ENCODE measurements at regions of chr5 and their contacts with region 1.

Region 1: DNA sequence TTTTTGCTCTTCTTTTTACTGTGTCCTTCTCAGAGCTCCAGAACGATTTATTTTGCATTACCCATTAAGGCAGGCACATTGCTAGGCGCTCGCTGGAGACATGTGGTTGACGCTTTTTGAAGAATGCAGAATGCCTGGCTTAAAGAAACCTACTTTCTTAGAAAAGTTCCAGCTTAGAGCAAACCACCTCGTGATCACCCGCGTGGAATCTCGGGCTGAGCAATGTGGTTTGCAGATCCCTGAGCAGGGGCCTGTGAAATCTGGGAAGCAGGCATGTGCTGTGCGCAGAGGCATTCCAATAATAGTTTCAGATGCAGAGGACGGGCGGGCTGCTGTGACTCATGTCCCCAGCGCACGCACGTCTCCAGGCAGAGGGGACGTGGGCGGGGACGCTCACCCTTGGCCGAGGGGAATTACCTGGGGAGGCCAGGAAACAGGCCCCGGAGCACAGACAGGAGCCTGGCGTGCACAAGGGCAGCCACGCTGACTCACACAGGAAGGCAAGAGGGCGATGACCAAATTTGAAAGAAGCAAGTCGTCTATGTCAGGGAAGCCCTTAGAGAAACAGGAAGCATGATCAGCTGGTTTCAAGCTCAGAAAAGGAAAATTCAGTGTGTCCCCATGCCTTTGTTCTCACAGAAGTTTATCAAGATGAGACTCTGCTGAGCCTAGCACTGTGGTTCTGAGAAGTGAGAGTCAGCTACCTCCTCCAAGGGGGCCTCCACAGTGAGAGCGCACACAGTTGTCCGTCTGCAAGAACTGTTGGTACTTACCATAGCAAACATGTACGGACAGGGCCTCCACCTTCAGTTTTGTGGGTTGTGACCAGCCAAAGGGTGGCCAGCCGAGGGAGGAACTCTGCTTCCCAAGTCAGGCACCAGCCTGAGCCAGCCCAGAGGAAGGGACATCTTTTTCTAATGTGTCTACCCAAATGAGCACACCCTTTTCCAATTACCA is 218.6 kb downstream of the PIK3R1 start:
- DNase-seq: peak; percentile 78
- ATAC-seq: peak; percentile 97
- H3K4me3 Mint-ChIP-seq: peak overlapping the region; percentile 71
- H3K27ac Mint-ChIP-seq: peak overlapping the region; percentile 85
- H3K4me1 Mint-ChIP-seq: peaks cover 39% of the 10 kb centered on the region
- H3K27me3 Mint-ChIP-seq: no peaks in the 10 kb centered on the region
- CTCF ChIP-seq: no peak

Region 2: GRCh38 chr5:67003935-67004729 is 1430.1 kb before region 1 on chr5:
- CTCF ChIA-PET with region 1: no interaction called
- POLR2A ChIA-PET with region 1: no interaction called
- intact Hi-C with region 1: loop called (anchors 5 kb)
- DNase-seq: peak; percentile 66
- ATAC-seq: peak; percentile 79
- H3K4me3 Mint-ChIP-seq: peak overlapping the region; percentile 87
- H3K27ac Mint-ChIP-seq: peak overlapping the region; percentile 72
- H3K4me1 Mint-ChIP-seq: peaks cover 30% of the 10 kb centered on the region
- H3K27me3 Mint-ChIP-seq: no peaks in the 10 kb centered on the region
- CTCF ChIP-seq: no peak

Region 3: GRCh38 chr5:67221487-67222242 is 1212.5 kb before region 1 on chr5:
- CTCF ChIA-PET with region 1: no interaction called
- POLR2A ChIA-PET with region 1: no interaction called
- intact Hi-C with region 1: loop called (anchors 5 kb)
- DNase-seq: no peak
- ATAC-seq: peak; percentile 75
- H3K4me3 Mint-ChIP-seq: peak overlapping the region; percentile 78
- H3K27ac Mint-ChIP-seq: peak overlapping the region; percentile 97
- H3K4me1 Mint-ChIP-seq: peaks cover 65% of the 10 kb centered on the region
- H3K27me3 Mint-ChIP-seq: no peaks in the 10 kb centered on the region
- CTCF ChIP-seq: no peak

Region 4: DNA sequence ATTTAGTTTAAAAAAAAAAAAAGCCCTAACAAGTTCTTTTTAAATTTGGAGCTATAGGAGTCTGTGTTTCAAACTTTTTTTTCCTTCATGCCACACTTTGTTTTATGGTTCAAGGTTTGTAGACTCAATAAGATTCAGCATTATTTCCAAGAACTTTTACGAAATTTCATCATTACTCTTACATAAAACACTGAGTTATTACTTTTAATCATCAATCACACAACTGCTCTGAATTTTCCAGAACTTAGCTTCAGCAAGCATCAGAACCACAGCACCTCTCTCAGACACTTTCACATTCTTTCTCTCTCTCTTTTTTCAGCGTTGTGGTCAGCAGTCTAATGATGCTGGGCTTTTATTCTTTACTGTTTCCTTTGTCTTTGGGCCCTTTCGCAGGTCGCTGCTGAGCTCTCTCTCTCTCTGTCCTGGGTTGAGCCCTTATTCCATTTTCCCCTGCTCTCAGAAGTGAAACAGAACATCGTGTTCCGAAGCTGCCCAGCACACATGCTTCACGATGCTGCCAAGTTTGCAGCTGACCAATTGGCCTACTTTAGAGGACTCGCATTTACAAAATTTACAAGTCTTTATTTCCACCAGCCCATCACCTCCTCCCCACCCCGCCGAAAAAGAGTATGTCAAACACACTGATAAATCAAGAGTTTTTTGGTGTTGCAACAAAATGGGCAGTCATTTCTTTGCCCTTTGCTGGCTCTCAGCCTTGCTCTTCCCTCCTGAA is 263.2 kb before region 1 on chr5:
- CTCF ChIA-PET with region 1: no interaction called
- POLR2A ChIA-PET with region 1: no interaction called
- intact Hi-C with region 1: no loop called
- DNase-seq: no peak
- ATAC-seq: no peak
- H3K4me3 Mint-ChIP-seq: no peak overlapping the region
- H3K27ac Mint-ChIP-seq: no peak overlapping the region
- H3K4me1 Mint-ChIP-seq: no peaks in the 10 kb centered on the region
- H3K27me3 Mint-ChIP-seq: peaks cover 1% of the 10 kb centered on the region
- CTCF ChIP-seq: no peak

Region 5: DNA sequence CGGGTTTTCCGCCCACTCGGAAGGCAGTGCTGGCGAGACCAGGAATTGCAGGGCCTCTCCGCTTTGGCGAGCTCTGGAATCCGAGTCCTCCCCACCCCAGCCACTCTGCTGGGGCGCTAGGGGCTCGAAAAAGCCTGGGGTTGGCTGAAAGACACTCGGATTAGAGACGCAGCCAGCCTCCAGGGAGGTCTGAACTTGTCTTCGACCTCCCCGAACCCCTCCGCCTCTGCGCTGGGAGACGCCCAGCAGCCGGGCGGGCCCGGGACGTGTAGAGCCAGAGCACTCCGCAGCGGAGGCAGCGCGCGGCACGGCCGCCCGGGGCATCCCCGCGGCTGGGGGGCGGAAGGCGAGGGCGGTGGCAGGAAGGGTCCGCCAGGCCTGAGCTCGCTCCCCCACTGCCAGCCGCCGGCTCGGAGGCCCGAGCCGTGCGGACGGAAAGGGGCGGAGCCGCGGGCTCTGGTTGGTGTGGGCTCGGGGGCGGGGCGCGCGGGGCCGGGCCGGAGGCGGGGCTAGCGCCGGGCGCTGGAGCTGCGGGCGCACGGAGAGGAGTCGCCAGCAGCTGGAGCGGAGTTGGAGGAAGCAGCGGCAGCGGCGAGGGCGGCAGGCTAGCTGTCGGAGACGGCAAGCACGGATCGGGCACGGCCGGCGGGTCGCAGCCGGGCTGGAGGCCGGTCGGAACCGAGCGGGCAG is 218.8 kb before region 1 on chr5 and contains the start of gene PIK3R1:
- CTCF ChIA-PET with region 1: no interaction called
- POLR2A ChIA-PET with region 1: interaction called, 4 read pairs
- intact Hi-C with region 1: loop called (anchors 1 kb)
- DNase-seq: peak; percentile 96
- ATAC-seq: peak; percentile 83
- H3K4me3 Mint-ChIP-seq: peak within 1 kb of the TSS; percentile 95
- H3K27ac Mint-ChIP-seq: peak within 1 kb of the TSS; percentile 96
- H3K4me1 Mint-ChIP-seq: peaks cover 43% of the 10 kb centered on the region
- H3K27me3 Mint-ChIP-seq: no peaks in the 10 kb centered on the region
- CTCF ChIP-seq: no peak
- total RNA-seq, gene PIK3R1: 45.5 and 52.2 TPM in 2 replicates

Region 6: DNA sequence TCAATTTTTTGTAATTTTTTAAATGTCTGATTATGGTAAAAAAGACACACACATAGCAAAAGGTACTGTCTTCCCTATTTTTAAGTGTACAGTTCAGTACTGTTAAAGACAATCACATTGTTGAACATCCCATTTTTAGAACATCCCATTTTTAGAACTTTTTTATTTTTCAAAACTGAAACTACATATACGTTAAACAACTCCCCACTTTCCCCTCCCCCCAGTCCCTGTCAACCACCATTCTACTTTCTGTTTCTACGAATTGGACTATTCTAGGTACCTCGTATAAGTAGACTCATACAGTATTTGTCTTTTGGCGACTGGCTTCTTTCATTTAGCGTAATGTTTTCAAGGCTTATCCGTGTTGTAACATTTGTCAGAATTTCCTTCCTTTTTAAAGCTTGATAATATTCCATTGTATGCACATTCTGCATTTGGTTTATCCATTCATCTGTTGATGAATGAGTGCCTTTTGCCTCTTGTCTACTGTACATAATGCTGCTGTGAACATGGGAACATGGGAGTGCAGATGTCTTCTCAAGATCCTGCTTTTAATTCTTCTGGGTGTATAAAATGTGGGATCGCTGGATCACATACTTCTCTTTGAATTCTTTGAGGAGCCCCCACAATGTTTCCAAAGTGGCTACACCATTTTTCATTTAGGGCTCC is 64.6 kb before region 1 on chr5:
- CTCF ChIA-PET with region 1: no interaction called
- POLR2A ChIA-PET with region 1: no interaction called
- intact Hi-C with region 1: loop called (anchors 2 kb)
- DNase-seq: no peak
- ATAC-seq: peak; percentile 69
- H3K4me3 Mint-ChIP-seq: peak overlapping the region; percentile 52
- H3K27ac Mint-ChIP-seq: no peak overlapping the region
- H3K4me1 Mint-ChIP-seq: peaks cover 29% of the 10 kb centered on the region
- H3K27me3 Mint-ChIP-seq: no peaks in the 10 kb centered on the region
- CTCF ChIP-seq: no peak

Region 7: DNA sequence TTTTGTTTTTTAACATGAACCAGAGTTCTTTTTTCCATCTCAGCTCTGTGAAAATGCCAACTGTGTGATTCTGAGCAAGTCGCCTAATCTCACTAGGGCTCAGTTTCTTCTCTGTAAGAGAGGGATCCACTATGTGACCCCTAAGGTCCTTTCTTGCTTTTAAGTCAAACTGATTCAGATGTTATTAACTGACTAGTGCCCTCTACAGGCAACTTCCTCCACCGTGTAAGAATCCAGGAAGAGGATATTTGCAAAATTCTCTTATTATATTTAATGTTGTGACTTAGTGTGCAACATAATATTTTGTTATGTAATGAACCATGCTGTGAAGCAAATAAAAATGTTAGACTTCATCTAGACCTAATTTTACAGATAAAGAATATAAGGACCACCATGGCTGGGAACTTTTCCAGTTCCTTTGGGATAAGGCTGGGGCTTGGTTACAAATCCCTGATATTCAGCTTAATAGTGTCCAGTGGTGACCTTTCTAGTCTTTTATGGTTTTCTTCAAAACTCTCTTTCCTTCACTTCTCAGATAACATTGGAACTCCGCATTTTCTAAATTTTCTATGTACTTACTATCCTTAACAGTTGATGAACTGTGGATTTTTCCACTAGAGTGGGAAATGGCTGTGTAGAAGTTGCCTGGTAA is 26.1 kb after region 1 on chr5:
- CTCF ChIA-PET with region 1: interaction called, 5 read pairs
- POLR2A ChIA-PET with region 1: no interaction called
- intact Hi-C with region 1: loop called (anchors 1 kb)
- DNase-seq: no peak
- ATAC-seq: peak; percentile 56
- H3K4me3 Mint-ChIP-seq: no peak overlapping the region
- H3K27ac Mint-ChIP-seq: no peak overlapping the region
- H3K4me1 Mint-ChIP-seq: no peaks in the 10 kb centered on the region
- H3K27me3 Mint-ChIP-seq: no peaks in the 10 kb centered on the region
- CTCF ChIP-seq: peak; percentile 54

Region 8: GRCh38 chr5:68484307-68485068 is 50.3 kb after region 1 on chr5:
- CTCF ChIA-PET with region 1: no interaction called
- POLR2A ChIA-PET with region 1: no interaction called
- intact Hi-C with region 1: no loop called
- DNase-seq: no peak
- ATAC-seq: no peak
- H3K4me3 Mint-ChIP-seq: no peak overlapping the region
- H3K27ac Mint-ChIP-seq: no peak overlapping the region
- H3K4me1 Mint-ChIP-seq: peaks cover 11% of the 10 kb centered on the region
- H3K27me3 Mint-ChIP-seq: peaks cover 9% of the 10 kb centered on the region
- CTCF ChIP-seq: no peak

Region 9: DNA sequence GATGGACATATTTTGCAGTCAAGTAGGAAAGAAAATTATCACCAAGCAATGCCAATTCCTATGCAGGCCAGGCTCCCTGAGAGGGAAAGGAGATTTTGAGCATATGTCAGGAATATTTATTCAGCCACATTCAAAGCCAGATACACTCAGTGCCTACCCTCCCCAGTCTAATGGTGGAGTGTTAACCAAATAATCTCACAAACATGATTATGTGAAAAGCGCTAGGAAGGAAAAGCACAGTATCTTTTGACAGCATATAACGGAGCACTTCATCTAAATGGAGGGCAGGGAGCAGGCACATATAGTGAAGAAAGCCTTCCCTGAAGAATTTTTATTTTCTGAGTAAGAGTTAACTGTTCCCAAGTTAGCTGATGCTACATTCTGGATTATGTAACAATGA is 579.3 kb after region 1 on chr5:
- CTCF ChIA-PET with region 1: no interaction called
- POLR2A ChIA-PET with region 1: no interaction called
- intact Hi-C with region 1: no loop called
- DNase-seq: no peak
- ATAC-seq: no peak
- H3K4me3 Mint-ChIP-seq: no peak overlapping the region
- H3K27ac Mint-ChIP-seq: no peak overlapping the region
- H3K4me1 Mint-ChIP-seq: no peaks in the 10 kb centered on the region
- H3K27me3 Mint-ChIP-seq: peaks cover 10% of the 10 kb centered on the region
- CTCF ChIP-seq: no peak

Measured in activated B cell treated with CpG ODN at 0.5 μM for 24 hours (primary cell).